Heart left ventricle (tissue), 16 donors: ENCODE measurements at regions of chr2 and their contacts with region 1.

Region 1: GRCh38 chr2:223008162-223008561 is 43.8 kb upstream of the KCNE4 start:
- DNase-seq: peak in 3 of 5 donors; percentile 23 to 34 (median 32)
- ATAC-seq: peak in 2 of 4 donors; percentile 41 to 71
- H3K4me3 ChIP-seq: no peak overlapping the region
- H3K27ac ChIP-seq: peak overlapping the region in 4 of 12 donors; percentile 6 to 56 (median 10)
- H3K4me1 ChIP-seq: no peaks in the 10 kb centered on the region
- H3K27me3 ChIP-seq: no peaks in the 10 kb centered on the region
- CTCF ChIP-seq: no peak
- POLR2A ChIP-seq: no peak

Region 2: DNA sequence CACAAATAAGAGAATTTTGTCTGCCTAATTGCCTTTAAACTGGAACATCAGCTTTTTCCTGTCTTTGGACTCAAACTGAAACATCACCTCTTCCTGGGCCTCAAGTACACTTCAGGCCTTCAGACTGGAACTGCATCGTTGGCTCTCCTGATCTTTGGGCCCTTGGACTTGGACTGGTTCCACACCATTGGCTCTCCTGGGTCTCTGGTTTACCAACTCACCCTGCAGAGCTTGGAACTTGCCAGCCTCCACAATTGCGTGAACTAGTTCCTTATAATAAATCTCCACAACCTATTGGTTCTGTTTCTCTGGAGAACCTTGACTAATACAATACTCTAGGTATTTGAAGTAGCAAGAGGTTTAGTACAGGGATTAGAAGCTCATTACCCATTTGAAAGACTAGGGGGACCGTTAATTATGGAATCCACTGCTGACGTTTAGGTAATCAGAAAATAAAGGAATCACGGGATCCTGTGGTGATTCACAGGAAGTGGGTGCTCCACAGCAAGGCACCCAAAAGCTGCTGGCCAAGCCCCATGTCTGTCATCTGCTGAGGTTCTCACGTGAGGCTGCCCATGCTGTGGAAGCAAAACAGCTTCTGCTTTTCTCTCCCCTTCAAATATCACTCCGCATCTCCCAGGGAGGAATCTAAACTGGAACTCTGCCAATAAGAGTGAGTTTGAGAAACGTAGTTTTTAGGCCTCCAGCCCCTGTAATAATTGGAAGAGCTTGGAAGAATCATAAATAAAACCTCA is 603.8 kb before region 1 on chr2:
- intact Hi-C with region 1: no loop called
- DNase-seq: peak in 2 of 5 donors; percentile 40 to 59
- ATAC-seq: peak in 1 of 4 donors; percentile 54
- H3K4me3 ChIP-seq: no peak overlapping the region
- H3K27ac ChIP-seq: peak overlapping the region in 1 of 12 donors; percentile 59
- H3K4me1 ChIP-seq: peaks cover 0 to 3% (median 0%) of the 10 kb centered on the region in 12 donors
- H3K27me3 ChIP-seq: no peaks in the 10 kb centered on the region
- CTCF ChIP-seq: no peak
- POLR2A ChIP-seq: no peak

Region 3: GRCh38 chr2:223041527-223042109 is 33.5 kb after region 1 on chr2:
- intact Hi-C with region 1: loop called in 1 of 10 experiments (anchors 5 kb)
- DNase-seq: peak; percentile 67 to 84 (median 78)
- ATAC-seq: peak; percentile 82 to 99 (median 93)
- H3K4me3 ChIP-seq: peak overlapping the region in 1 of 12 donors; percentile 21
- H3K27ac ChIP-seq: peak overlapping the region in 6 of 12 donors; percentile 33 to 71 (median 48)
- H3K4me1 ChIP-seq: peaks cover 0 to 20% (median 1%) of the 10 kb centered on the region in 12 donors
- H3K27me3 ChIP-seq: no peaks in the 10 kb centered on the region
- CTCF ChIP-seq: no peak
- POLR2A ChIP-seq: peak in 1 of 2 donors; percentile 37